ENCODE measurements at regions of chr12 and their contacts with region 1.

Region 1: GRCh38 chr12:94101738-94102660 is 46.4 kb upstream of the PLXNC1 start:
- DNase-seq: peak; percentile 79
- H3K4me3 ChIP-seq: peak overlapping the region; percentile 33 to 58 (median 52)
- H3K27ac ChIP-seq: no peak overlapping the region
- H3K4me1 ChIP-seq: peaks cover 22% of the 10 kb centered on the region
- H3K27me3 ChIP-seq: peaks cover 6 to 13% of the 10 kb centered on the region in 2 experiments
- CTCF ChIP-seq: peak; percentile 80 to 86
- POLR2A ChIP-seq: no peak

Region 2: GRCh38 chr12:93419388-93420034 is 682.5 kb before region 1 on chr12:
- CTCF ChIA-PET with region 1: interaction called, 86 read pairs
- POLR2A ChIA-PET with region 1: no interaction called
- dilution Hi-C with region 1: no loop called
- intact Hi-C with region 1: loop called (anchors 1 kb)
- DNase-seq: peak; percentile 76
- H3K4me3 ChIP-seq: no peak overlapping the region
- H3K27ac ChIP-seq: no peak overlapping the region
- H3K4me1 ChIP-seq: peaks cover 2% of the 10 kb centered on the region
- H3K27me3 ChIP-seq: no peaks in the 10 kb centered on the region
- CTCF ChIP-seq: peak; percentile 33 to 38
- POLR2A ChIP-seq: no peak

Region 3: DNA sequence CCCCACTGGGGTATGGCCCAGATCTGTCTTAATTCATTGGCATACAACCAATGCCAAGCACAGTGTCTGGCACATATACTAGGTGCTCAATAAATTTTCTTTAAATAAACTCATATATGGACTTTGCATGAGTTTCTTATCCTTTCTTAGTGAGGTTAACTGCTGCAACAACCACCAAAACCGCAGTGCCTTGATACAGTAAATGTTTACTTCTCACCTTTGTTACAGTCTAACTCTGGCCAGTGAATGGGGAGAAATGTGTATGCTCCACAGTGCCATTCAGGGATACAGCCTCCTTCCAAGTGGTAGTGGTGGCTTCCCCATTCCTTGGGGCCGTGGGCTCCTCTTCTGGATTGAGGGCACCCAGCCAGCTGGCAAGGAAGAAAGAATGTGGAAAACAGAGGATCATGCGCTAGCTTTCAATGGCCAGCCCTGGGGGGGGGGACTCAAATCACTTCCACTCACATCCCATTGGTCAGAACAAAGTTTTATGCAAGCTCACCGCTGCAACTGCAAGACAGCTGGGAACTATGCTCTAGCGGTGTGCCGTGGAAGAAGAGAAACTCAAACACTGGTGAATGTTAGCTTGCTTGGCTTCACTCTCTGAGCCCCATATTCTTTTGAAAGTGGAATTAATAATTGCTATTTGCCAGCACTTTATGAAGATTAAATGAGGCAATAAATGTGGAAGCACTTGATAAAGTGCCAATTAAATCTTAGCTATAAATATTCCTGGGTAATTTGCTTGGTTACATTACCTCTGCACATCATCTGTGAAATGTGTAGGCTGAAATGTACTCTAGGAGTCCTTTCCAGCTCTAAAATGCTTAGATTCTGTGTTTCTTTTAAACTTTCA is 580.5 kb before region 1 on chr12:
- CTCF ChIA-PET with region 1: interaction called, 79 read pairs
- POLR2A ChIA-PET with region 1: no interaction called
- dilution Hi-C with region 1: no loop called
- intact Hi-C with region 1: loop called (anchors 5 kb)
- DNase-seq: no peak
- H3K4me3 ChIP-seq: no peak overlapping the region
- H3K27ac ChIP-seq: no peak overlapping the region
- H3K4me1 ChIP-seq: no peaks in the 10 kb centered on the region
- H3K27me3 ChIP-seq: peaks cover 2% of the 10 kb centered on the region in 2 experiments
- CTCF ChIP-seq: no peak
- POLR2A ChIP-seq: no peak

Region 4: DNA sequence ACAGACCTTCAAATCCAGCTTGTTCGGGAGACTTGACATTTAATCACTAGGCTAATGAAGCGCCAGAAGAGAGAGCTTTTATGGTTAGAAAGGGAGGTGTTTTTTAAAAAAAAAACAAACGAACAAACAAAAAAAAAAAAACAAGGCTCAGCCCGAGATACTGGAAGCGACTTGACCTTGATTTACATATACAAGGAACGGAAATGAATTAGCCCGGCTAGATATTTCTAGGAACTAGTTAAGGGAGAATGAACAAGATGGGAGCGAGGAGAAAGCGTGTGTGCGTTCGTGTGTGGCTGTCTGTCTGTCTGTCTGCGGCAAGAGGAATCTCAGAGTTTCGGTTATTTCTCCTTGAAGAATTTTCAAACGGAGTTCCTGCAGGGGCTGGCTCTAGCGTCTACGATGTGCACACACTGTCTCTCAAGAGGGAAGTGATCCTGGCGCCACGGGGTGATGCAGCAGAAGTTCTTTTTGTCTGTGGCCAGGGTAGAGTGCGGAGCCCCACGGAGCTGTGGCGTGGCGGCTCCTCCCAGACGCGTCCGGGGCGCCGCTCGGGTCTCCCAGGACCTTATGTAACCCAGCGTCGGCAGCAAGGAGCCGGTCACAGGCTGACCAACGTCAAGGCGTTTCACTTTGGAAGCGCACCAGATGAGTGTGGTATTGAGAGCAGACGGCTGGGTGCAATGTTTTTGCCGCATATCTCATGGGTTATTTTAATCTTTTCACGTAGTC is 510.7 kb before region 1 on chr12:
- CTCF ChIA-PET with region 1: interaction called, 12 read pairs
- POLR2A ChIA-PET with region 1: no interaction called
- dilution Hi-C with region 1: no loop called
- intact Hi-C with region 1: no loop called
- DNase-seq: peak; percentile 47
- H3K4me3 ChIP-seq: peak overlapping the region; percentile 40 to 79 (median 50)
- H3K27ac ChIP-seq: no peak overlapping the region
- H3K4me1 ChIP-seq: no peaks in the 10 kb centered on the region
- H3K27me3 ChIP-seq: no peaks in the 10 kb centered on the region
- CTCF ChIP-seq: no peak
- POLR2A ChIP-seq: no peak

Region 5: DNA sequence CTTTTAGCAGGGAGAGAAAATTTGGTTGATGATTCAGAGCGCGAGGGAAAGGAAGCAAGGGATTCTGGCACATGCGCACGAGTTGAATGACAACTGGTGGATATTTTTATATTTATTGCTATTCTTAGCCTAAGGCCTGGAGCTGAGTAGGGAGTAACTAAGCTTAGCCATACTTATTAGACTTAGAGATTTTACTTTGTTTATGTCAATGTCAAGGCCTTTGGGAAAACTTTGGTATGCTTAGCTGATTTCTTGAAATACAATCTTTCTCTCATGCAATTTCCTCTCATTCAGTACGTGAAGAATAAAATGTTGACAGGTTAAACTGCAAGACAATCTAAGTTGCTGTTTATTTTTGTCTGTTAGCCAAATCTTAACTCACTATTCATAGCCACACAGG is 323.7 kb before region 1 on chr12:
- CTCF ChIA-PET with region 1: interaction called, 34 read pairs
- POLR2A ChIA-PET with region 1: no interaction called
- dilution Hi-C with region 1: no loop called
- intact Hi-C with region 1: no loop called
- DNase-seq: peak; percentile 82
- H3K4me3 ChIP-seq: no peak overlapping the region
- H3K27ac ChIP-seq: peak overlapping the region; percentile 96
- H3K4me1 ChIP-seq: peaks cover 33% of the 10 kb centered on the region
- H3K27me3 ChIP-seq: no peaks in the 10 kb centered on the region
- CTCF ChIP-seq: no peak
- POLR2A ChIP-seq: no peak

Region 6: GRCh38 chr12:93990832-93991803 is 110.9 kb before region 1 on chr12:
- CTCF ChIA-PET with region 1: interaction called, 13 read pairs
- POLR2A ChIA-PET with region 1: no interaction called
- dilution Hi-C with region 1: no loop called
- intact Hi-C with region 1: no loop called
- DNase-seq: no peak
- H3K4me3 ChIP-seq: no peak overlapping the region
- H3K27ac ChIP-seq: no peak overlapping the region
- H3K4me1 ChIP-seq: no peaks in the 10 kb centered on the region
- H3K27me3 ChIP-seq: no peaks in the 10 kb centered on the region
- CTCF ChIP-seq: peak in 1 of 2 donors; percentile 7
- POLR2A ChIP-seq: no peak

Region 7: GRCh38 chr12:94222351-94223084 is 120.5 kb after region 1 on chr12:
- CTCF ChIA-PET with region 1: no interaction called
- POLR2A ChIA-PET with region 1: no interaction called
- dilution Hi-C with region 1: no loop called
- intact Hi-C with region 1: no loop called
- DNase-seq: no peak
- H3K4me3 ChIP-seq: no peak overlapping the region
- H3K27ac ChIP-seq: no peak overlapping the region
- H3K4me1 ChIP-seq: no peaks in the 10 kb centered on the region
- H3K27me3 ChIP-seq: peaks cover 0 to 1% of the 10 kb centered on the region in 2 experiments
- CTCF ChIP-seq: no peak
- POLR2A ChIP-seq: no peak